Activated B cell treated with CpG ODN at 0.5 μM for 24 hours (primary cell): ENCODE measurements at regions of chr13 and their contacts with region 1.

Region 1: DNA sequence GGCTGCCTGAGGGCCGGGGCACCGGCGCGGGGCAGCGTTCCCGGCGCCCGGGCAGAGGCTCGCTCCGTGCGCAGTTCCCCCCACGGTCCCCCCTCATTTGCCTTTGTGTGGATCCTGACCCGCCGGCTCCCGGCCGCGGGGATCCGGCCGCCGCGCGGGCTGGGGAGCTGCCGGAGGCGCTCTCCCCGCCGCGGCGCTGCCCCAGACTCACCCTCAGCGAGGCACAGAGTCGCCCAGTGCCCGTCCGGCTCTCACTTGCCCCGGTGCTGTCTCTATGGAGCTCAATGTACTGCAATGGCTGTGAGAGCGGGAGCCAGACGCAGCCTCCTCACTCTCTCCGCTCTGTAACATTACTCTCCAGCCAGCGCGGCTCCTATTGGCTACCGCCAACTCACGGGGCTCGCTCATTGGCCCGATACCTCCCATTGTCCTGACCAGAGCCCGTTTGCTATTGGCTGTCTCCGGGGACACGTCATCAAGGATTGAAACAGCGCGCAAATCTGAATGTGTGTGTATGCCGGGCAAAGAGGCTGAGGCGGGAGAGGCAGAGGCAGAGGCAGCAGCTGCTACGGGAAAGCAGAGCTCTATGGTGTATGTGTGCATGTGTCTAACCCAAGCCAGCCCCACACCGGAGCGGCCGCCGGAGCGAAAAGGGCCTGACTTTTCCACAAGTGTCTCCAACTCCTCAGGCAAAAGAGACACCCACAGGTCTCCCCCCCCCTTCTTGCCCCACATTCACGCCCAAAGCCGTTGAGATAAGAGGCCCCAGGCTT is at the start of gene HMGB1:
- DNase-seq: peak; percentile 86
- ATAC-seq: peak; percentile 83
- H3K4me3 Mint-ChIP-seq: peak within 1 kb of the TSS; percentile 93
- H3K27ac Mint-ChIP-seq: peak within 1 kb of the TSS; percentile 99
- H3K4me1 Mint-ChIP-seq: peaks cover 42% of the 10 kb centered on the region
- H3K27me3 Mint-ChIP-seq: peaks cover 3% of the 10 kb centered on the region
- CTCF ChIP-seq: no peak
- total RNA-seq, gene HMGB1: 338 and 354 TPM in 2 replicates

Region 2: DNA sequence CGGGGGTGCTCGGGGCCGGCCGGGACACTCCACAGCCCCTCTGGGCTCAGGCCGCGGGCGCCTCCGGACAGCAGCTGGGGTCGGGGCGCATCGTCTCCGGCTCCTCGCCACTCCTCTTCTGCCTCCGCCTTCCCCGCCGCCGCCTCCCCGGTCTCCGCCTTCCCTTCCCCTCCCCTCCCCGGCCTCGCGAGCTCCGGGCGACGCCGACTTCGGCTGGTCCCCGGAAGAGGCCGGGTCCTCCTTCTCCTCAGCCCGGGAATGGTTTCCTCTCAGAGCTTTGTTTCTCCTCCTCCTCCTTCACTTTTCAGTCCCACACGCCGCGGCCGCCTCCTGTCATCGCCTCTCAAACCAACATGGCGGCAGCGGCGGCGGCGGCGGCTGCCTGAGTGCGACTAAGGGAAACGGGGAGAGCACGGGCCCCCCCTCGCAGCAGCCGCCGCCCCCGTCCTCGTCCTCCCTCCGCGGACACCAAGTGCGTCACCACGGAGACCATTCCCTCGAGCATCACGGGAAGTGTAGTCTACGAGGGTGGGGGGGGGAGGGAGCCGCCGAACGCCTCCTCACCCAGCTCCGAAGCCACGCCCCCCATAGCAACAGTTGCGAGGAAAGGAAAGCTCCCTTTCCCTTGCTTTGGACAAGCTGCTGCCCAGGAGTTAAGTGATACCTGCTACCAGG is 615.4 kb before region 1 on chr13 and contains the start of gene UBL3:
- CTCF ChIA-PET with region 1: no interaction called
- POLR2A ChIA-PET with region 1: interaction called, 3 read pairs
- intact Hi-C with region 1: loop called (anchors 1 kb)
- DNase-seq: peak; percentile 84
- ATAC-seq: peak; percentile 90
- H3K4me3 Mint-ChIP-seq: peak within 1 kb of the TSS; percentile 96
- H3K27ac Mint-ChIP-seq: peak within 1 kb of the TSS; percentile 99
- H3K4me1 Mint-ChIP-seq: peaks cover 33% of the 10 kb centered on the region
- H3K27me3 Mint-ChIP-seq: no peaks in the 10 kb centered on the region
- CTCF ChIP-seq: no peak
- total RNA-seq, gene UBL3: 17.9 and 18.6 TPM in 2 replicates

Region 3: DNA sequence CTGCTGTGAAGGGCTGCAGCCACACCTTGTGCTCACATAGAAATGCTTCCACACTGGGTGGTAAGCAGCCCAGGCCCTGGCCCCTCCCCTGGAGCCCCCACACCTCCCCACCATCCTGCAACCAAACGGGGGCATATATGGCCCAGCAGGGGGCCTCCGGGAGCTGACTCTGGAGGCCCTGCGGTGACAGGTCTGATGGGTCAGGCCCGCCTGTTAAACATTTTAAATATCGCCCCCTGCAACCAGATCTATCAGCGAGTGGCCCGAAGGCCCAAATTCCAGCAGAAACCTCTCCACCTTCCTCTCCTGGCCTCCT is 110.4 kb before region 1 on chr13:
- CTCF ChIA-PET with region 1: interaction called, 8 read pairs
- POLR2A ChIA-PET with region 1: interaction called, 4 read pairs
- intact Hi-C with region 1: loop called (anchors 1 kb)
- DNase-seq: peak; percentile 61
- ATAC-seq: peak; percentile 100
- H3K4me3 Mint-ChIP-seq: peak overlapping the region; percentile 45
- H3K27ac Mint-ChIP-seq: peak overlapping the region; percentile 77
- H3K4me1 Mint-ChIP-seq: peaks cover 32% of the 10 kb centered on the region
- H3K27me3 Mint-ChIP-seq: no peaks in the 10 kb centered on the region
- CTCF ChIP-seq: no peak

Region 4: GRCh38 chr13:30422054-30422839 is 43.5 kb before region 1 on chr13 and contains the start of gene UBE2L5:
- CTCF ChIA-PET with region 1: interaction called, 5 read pairs
- POLR2A ChIA-PET with region 1: interaction called, 37 read pairs
- intact Hi-C with region 1: loop called (anchors 1 kb)
- DNase-seq: peak; percentile 75
- ATAC-seq: peak; percentile 94
- H3K4me3 Mint-ChIP-seq: peak within 1 kb of the TSS; percentile 88
- H3K27ac Mint-ChIP-seq: peak within 1 kb of the TSS; percentile 94
- H3K4me1 Mint-ChIP-seq: peaks cover 43% of the 10 kb centered on the region
- H3K27me3 Mint-ChIP-seq: no peaks in the 10 kb centered on the region
- CTCF ChIP-seq: no peak
- total RNA-seq, gene UBE2L5: 0.24 and 0.42 TPM in 2 replicates

Region 5: GRCh38 chr13:30572859-30573275 is 107.1 kb after region 1 on chr13:
- CTCF ChIA-PET with region 1: interaction called, 4 read pairs
- POLR2A ChIA-PET with region 1: interaction called, 3 read pairs
- intact Hi-C with region 1: loop called (anchors 2 kb)
- DNase-seq: no peak
- ATAC-seq: peak; percentile 83
- H3K4me3 Mint-ChIP-seq: peak overlapping the region; percentile 64
- H3K27ac Mint-ChIP-seq: peak overlapping the region; percentile 71
- H3K4me1 Mint-ChIP-seq: peaks cover 23% of the 10 kb centered on the region
- H3K27me3 Mint-ChIP-seq: no peaks in the 10 kb centered on the region
- CTCF ChIP-seq: no peak

Region 6: GRCh38 chr13:30802953-30803478 is 337.2 kb after region 1 on chr13:
- CTCF ChIA-PET with region 1: interaction called, 4 read pairs
- POLR2A ChIA-PET with region 1: no interaction called
- intact Hi-C with region 1: loop called (anchors 1 kb)
- DNase-seq: peak; percentile 73
- ATAC-seq: peak; percentile 98
- H3K4me3 Mint-ChIP-seq: peak overlapping the region; percentile 73
- H3K27ac Mint-ChIP-seq: no peak overlapping the region
- H3K4me1 Mint-ChIP-seq: peaks cover 11% of the 10 kb centered on the region
- H3K27me3 Mint-ChIP-seq: no peaks in the 10 kb centered on the region
- CTCF ChIP-seq: peak; percentile 90